Activated CD8-positive, alpha-beta T cell treated with anti-CD3 and anti-CD28 coated beads for 36 hours (primary cell): ENCODE measurements at regions of chr18 and their contacts with region 1.

Region 1: GRCh38 chr18:79378542-79379250 is 17.0 kb upstream of the NFATC1 start:
- DNase-seq: peak; percentile 87
- ATAC-seq: peak; percentile 95
- H3K4me3 Mint-ChIP-seq: no peak overlapping the region
- H3K27ac Mint-ChIP-seq: no peak overlapping the region
- H3K4me1 Mint-ChIP-seq: peaks cover 8% of the 10 kb centered on the region
- H3K27me3 Mint-ChIP-seq: no peaks in the 10 kb centered on the region
- CTCF ChIP-seq: peak; percentile 92

Region 2: GRCh38 chr18:79283131-79283810 is 95.4 kb before region 1 on chr18:
- CTCF ChIA-PET with region 1: no interaction called
- POLR2A ChIA-PET with region 1: no interaction called
- intact Hi-C with region 1: no loop called
- DNase-seq: no peak
- ATAC-seq: no peak
- H3K4me3 Mint-ChIP-seq: no peak overlapping the region
- H3K27ac Mint-ChIP-seq: no peak overlapping the region
- H3K4me1 Mint-ChIP-seq: no peaks in the 10 kb centered on the region
- H3K27me3 Mint-ChIP-seq: no peaks in the 10 kb centered on the region
- CTCF ChIP-seq: no peak

Region 3: DNA sequence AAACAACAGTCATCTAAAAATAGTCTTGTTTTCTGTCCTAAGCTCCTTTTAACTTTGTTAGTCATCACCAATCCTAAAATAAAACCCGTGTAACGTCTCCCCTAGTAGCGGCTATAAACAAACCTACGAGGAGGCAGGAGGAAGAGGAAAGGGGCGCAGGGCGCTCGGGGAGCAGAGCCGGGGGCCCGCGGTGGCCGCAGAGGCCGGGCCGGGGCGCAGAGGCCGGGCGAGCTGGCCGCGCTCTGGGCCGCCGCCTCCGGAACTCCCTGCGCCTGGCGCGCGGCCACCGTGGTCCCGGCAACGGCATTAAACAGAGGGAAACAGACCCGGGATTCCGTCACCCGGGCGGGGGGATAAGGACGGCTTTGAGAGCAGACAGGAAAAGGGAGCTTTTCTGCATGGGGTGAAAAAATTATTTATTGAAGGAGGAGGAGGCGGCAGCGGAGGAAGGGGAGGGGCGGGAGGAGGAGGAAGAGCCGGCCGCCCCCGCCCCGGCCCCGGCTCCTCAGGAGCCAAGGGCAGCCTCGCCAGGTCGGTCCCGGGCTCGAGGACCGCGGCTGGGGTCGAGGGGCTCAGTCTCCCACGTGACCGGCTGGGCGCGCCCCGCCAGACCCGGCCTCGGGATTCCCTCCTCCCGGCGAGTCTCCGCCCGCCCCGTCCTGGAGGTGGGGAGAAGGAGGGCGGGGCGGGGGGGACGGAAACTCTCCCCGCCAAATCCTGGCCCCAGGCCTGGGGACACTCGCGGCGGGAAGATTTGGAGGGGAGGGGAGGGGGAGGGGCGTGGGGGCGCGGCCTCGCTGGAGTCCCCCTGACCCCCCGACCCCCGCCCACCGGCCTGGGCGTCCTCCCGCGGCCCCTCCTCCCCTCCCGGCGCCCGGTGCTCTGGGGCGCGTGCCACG is 15.2 kb after region 1 on chr18:
- CTCF ChIA-PET with region 1: interaction called, 48 read pairs
- POLR2A ChIA-PET with region 1: interaction called, 8 read pairs
- intact Hi-C with region 1: no loop called
- DNase-seq: peak; percentile 66
- ATAC-seq: peak; percentile 12
- H3K4me3 Mint-ChIP-seq: peak overlapping the region; percentile 76
- H3K27ac Mint-ChIP-seq: peak overlapping the region; percentile 84
- H3K4me1 Mint-ChIP-seq: peaks cover 18% of the 10 kb centered on the region
- H3K27me3 Mint-ChIP-seq: peaks cover 15% of the 10 kb centered on the region
- CTCF ChIP-seq: no peak

Region 4: DNA sequence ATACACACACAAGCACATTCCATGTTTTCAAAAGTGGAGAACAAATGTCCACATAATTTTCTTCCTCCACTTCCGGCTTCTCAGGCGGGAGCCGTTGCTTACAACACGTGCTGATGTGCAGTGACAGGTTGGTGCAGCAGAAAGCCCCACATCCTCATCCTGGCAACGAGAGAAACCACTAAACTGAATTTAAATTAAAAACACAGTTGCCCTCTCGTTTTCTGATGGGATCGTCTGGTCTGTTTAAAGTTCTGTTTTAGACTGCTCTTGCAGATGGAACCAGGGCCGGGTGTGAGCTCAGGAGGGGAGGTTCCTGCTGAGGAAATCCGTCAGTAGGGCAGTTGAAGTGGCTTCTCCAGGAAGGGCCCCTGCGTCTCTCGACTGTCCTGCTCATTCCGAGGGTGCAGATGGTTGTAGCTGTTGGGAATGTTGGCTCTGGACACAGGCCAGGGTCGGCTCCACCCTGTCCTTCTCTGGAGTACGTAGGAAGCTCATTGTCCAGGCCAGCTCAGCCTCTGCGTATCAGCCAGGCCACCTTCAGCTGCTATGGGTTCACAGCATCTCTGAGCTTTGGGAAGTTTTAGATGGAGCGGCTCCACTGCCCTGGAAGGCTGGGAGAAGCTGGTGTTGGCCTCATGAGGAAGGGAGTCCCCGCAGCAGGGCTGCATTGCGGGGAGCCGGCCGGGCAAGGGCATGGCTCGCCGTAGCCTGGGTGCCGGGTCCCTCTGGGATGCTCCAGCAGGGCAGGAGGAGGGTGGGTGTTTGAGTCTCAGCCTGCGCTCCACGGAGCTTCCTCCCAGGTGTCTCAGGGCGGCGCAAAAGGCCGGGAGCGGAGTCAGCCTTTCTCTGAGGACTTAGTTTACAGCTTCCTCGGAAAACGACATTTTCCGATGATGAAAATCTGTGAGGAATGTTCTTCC is 75.4 kb after region 1 on chr18:
- CTCF ChIA-PET with region 1: interaction called, 10 read pairs
- POLR2A ChIA-PET with region 1: no interaction called
- intact Hi-C with region 1: no loop called
- DNase-seq: no peak
- ATAC-seq: no peak
- H3K4me3 Mint-ChIP-seq: no peak overlapping the region
- H3K27ac Mint-ChIP-seq: no peak overlapping the region
- H3K4me1 Mint-ChIP-seq: no peaks in the 10 kb centered on the region
- H3K27me3 Mint-ChIP-seq: no peaks in the 10 kb centered on the region
- CTCF ChIP-seq: no peak

Region 5: DNA sequence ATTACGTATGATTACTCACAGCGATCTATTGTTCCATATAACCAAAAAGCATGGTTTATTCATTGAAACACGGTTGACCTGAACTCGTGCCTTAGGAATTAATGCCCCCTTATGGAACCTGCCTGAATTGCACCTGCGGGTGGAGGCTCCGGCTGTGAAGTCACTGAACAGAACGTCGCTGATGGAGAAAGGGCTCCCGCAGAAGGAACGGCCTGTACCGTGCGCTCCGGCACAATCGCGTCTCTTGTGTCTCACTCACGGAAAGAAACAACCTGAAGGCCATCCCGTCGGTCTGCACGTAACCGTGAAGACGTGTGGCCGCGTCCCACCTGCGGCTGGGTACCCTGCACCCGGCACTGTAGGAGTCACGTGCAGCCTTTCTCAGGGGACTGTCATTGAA is 150.2 kb after region 1 on chr18:
- CTCF ChIA-PET with region 1: interaction called, 88 read pairs
- POLR2A ChIA-PET with region 1: interaction called, 3 read pairs
- intact Hi-C with region 1: loop called (anchors 2 kb)
- DNase-seq: peak; percentile 83
- ATAC-seq: peak; percentile 17
- H3K4me3 Mint-ChIP-seq: no peak overlapping the region
- H3K27ac Mint-ChIP-seq: no peak overlapping the region
- H3K4me1 Mint-ChIP-seq: peaks cover 15% of the 10 kb centered on the region
- H3K27me3 Mint-ChIP-seq: no peaks in the 10 kb centered on the region
- CTCF ChIP-seq: peak; percentile 90

Region 6: DNA sequence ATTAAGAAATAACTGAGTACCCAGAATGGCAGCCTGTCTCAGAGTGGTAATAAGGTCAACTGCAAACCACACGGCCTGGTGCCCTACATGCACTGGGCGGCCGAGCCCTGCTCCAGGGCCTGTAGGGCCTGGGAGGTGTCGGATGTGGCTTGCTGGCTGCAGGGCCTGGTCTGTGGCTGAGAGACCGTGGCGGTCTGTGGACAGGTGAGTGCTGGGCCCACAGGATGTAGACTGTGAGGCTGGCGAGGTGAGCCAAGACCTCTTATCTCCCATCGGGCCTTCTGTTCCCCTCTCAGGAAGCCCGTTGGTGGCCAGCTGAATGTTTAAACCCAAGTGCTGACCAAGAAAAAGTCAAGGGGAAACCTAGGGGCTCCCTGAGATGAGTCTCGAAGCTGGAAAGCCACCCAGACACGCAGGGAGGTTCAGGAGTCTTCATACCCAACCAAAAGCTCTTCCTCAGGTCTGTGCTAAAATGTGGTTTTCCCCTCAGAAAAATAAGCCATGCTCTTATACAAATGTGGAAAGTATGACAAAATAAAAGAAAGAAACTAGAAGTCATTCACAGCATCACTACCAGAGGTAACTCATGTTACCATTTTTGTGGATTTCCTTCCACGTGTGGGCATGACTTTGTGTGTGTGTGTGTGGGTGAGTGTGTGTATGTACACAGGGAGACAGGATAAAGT is 253.2 kb after region 1 on chr18:
- CTCF ChIA-PET with region 1: no interaction called
- POLR2A ChIA-PET with region 1: no interaction called
- intact Hi-C with region 1: no loop called
- DNase-seq: peak; percentile 18
- ATAC-seq: peak; percentile 55
- H3K4me3 Mint-ChIP-seq: no peak overlapping the region
- H3K27ac Mint-ChIP-seq: peak overlapping the region; percentile 47
- H3K4me1 Mint-ChIP-seq: peaks cover 9% of the 10 kb centered on the region
- H3K27me3 Mint-ChIP-seq: peaks cover under 1% of the 10 kb centered on the region
- CTCF ChIP-seq: no peak

Region 7: GRCh38 chr18:79644006-79644665 is 265.4 kb after region 1 on chr18:
- CTCF ChIA-PET with region 1: interaction called, 135 read pairs
- POLR2A ChIA-PET with region 1: no interaction called
- intact Hi-C with region 1: loop called (anchors 2 kb)
- DNase-seq: peak; percentile 81
- ATAC-seq: peak; percentile 95
- H3K4me3 Mint-ChIP-seq: no peak overlapping the region
- H3K27ac Mint-ChIP-seq: no peak overlapping the region
- H3K4me1 Mint-ChIP-seq: peaks cover 12% of the 10 kb centered on the region
- H3K27me3 Mint-ChIP-seq: peaks cover 5% of the 10 kb centered on the region
- CTCF ChIP-seq: peak; percentile 99